ENCODE measurements at regions of chr11 and their contacts with region 1.

Region 1: DNA sequence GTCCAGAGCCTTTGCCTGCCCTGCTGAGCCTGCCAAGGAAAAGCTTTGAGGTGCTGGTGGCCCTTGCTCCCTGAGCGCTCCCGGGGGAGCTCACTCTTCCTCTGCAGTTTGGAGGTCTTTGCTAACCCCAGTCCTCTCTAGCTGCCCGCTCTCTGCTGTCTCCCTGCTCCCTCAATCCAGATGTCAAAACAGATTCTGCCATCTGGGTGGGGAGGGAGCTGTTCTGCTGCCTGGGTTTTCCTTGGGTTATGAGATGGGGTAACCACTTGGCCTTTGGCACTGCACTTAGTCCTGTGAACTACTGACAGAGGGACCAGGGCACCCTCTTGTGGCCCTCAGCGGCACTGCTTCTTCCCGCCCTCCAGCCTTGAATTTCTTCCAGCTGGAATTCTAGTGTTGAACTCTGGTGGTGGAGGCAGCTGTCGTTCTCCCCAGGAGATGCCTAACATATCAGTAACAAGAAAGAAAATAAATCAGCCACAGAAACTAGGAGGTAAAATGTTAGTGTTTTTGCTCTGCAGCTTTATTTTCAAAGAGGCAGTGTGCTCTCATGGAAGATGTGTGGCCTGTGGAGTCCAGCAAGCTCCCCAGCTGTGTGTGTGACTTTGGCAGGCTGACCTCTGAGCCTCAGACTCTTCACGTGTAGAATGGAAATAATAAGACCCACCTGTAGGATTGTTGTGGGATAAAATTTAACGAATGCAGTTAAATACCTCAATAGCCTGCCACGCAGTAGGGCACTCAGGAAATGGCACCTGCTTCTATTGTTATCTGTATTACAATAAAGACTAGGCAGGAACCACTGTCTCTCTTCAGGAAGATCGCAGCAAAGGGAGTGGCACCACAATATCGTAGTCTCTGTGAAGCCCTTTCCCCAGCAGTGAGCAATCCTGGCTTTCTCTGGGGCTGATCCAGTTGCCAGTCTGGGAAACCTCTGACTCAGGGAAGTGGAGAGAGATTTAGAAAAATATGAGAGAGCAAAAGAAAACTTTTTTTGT is 23.4 kb downstream of the ARFGAP2 start:
- DNase-seq: peak; percentile 32
- H3K4me3 Mint-ChIP-seq: no peak overlapping the region
- H3K27ac Mint-ChIP-seq: no peak overlapping the region
- H3K4me1 Mint-ChIP-seq: peaks cover 24% of the 10 kb centered on the region
- H3K27me3 Mint-ChIP-seq: peaks cover 3% of the 10 kb centered on the region

Region 2: GRCh38 chr11:46920755-46921154 is 232.5 kb before region 1 on chr11:
- intact Hi-C with region 1: loop called (anchors 1 kb)
- DNase-seq: no peak
- H3K4me3 Mint-ChIP-seq: no peak overlapping the region
- H3K27ac Mint-ChIP-seq: no peak overlapping the region
- H3K4me1 Mint-ChIP-seq: peaks cover 24% of the 10 kb centered on the region
- H3K27me3 Mint-ChIP-seq: peaks cover 43% of the 10 kb centered on the region

Region 3: GRCh38 chr11:47136327-47136726 is 16.9 kb before region 1 on chr11:
- intact Hi-C with region 1: no loop called
- DNase-seq: no peak
- H3K4me3 Mint-ChIP-seq: no peak overlapping the region
- H3K27ac Mint-ChIP-seq: no peak overlapping the region
- H3K4me1 Mint-ChIP-seq: peaks cover 5% of the 10 kb centered on the region
- H3K27me3 Mint-ChIP-seq: peaks cover 2% of the 10 kb centered on the region

Region 4: GRCh38 chr11:47656260-47656885 is 503.1 kb after region 1 on chr11:
- intact Hi-C with region 1: no loop called
- DNase-seq: no peak
- H3K4me3 Mint-ChIP-seq: no peak overlapping the region
- H3K27ac Mint-ChIP-seq: no peak overlapping the region
- H3K4me1 Mint-ChIP-seq: no peaks in the 10 kb centered on the region
- H3K27me3 Mint-ChIP-seq: peaks cover 8% of the 10 kb centered on the region